AG04449 (cell line): ENCODE measurements at regions of chr12 and their contacts with region 1.

Region 1: DNA sequence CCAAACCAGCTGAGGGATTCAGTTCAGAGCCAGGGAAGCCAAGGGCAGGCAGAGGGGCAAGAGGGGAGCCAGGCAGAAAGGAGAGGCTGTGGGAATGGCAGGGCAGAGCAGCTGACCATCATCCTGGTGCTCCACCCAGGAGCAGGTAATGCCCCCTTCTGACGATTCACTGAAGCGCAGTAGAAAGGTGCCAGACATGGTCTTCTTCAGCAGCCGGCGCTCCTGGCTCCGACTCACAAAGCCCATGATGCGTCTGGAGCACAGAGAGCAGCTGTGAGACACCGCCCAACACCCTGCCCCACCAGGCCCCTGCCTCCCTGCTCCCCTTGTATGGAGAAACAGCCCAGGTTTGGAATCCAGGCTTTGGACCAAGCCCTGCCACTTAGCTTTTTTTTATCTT is 8.0 kb downstream of the IL23A start:
- DNase-seq: no peak
- H3K4me3 ChIP-seq: no peak overlapping the region
- CTCF ChIP-seq: no peak

Region 2: GRCh38 chr12:56333679-56334489 is 12.8 kb before region 1 on chr12 and contains the start of gene PAN2:
- CTCF ChIA-PET with region 1: interaction called, 14 read pairs
- POLR2A ChIA-PET with region 1: interaction called, 4 read pairs
- DNase-seq: peak; percentile 88
- H3K4me3 ChIP-seq: peak within 1 kb of the TSS; percentile 67
- CTCF ChIP-seq: peak; percentile 50

Region 3: DNA sequence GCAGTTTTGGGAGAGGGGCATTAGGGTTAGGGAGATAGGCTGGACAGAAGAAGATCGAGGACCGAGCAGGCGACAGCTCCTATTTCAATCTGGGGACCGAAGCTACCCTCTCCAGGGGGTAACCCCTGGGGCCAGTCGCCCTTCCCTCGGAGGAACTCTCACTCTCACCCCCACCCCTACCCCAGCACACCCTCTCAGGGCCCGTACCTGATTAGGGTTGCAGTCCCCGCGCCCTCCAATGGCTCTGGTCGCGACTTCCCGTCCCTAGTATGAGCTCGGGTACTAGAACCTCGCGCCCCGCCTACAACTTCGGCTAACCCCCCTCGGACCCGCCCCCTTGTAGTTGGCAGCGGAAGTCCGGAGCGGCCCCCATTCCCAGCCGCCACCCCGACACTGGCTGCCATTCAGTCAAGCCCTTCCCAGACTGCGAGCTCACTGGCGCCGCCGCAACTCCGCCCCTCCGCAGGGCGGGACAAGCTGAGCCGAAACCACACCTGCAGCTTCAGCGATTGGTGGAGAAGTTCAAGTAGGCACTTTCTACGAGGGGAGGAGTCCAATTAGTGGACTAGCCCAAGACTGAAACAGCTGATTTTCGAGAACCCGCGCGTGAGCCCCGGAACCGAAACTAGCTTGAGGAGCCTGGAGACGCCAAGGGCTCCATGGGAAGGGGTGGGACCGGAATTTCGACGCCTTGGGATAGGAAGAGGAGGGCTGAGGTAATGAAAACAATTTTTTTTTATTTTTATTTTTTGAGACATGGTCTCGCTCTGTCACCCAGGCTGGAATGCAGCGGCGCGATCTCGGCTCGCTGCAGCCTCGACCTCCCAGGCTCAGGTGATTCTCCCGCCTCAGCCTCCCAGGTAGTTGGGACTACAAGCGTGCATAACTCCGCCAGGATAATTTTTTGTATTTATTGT is 13.4 kb after region 1 on chr12 and contains the start of gene STAT2:
- CTCF ChIA-PET with region 1: interaction called, 7 read pairs
- POLR2A ChIA-PET with region 1: interaction called, 11 read pairs
- DNase-seq: peak; percentile 99
- H3K4me3 ChIP-seq: peak within 1 kb of the TSS; percentile 90
- CTCF ChIP-seq: no peak